ENCODE measurements at regions of chr1 and their contacts with region 1.

Region 1: GRCh38 chr1:169466259-169467230 is 19.2 kb downstream of the SLC19A2 start:
- DNase-seq: peak; percentile 46
- ATAC-seq: no peak
- H3K4me3 ChIP-seq: no peak overlapping the region
- H3K4me3 Mint-ChIP-seq: no peak overlapping the region
- H3K27ac ChIP-seq: no peak overlapping the region
- H3K27ac Mint-ChIP-seq: no peak overlapping the region
- H3K4me1 ChIP-seq: no peaks in the 10 kb centered on the region
- H3K4me1 Mint-ChIP-seq: no peaks in the 10 kb centered on the region
- H3K27me3 ChIP-seq: no peaks in the 10 kb centered on the region
- H3K27me3 Mint-ChIP-seq: no peaks in the 10 kb centered on the region
- CTCF ChIP-seq: peak; percentile 22

Region 2: GRCh38 chr1:169809370-169810095 is 343.0 kb after region 1 on chr1:
- CTCF ChIA-PET with region 1: interaction called, 9 read pairs
- POLR2A ChIA-PET with region 1: no interaction called
- intact Hi-C with region 1: loop called (anchors 1 kb)
- DNase-seq: peak; percentile 62
- ATAC-seq: no peak
- H3K4me3 ChIP-seq: no peak overlapping the region
- H3K4me3 Mint-ChIP-seq: no peak overlapping the region
- H3K27ac ChIP-seq: no peak overlapping the region
- H3K27ac Mint-ChIP-seq: no peak overlapping the region
- H3K4me1 ChIP-seq: no peaks in the 10 kb centered on the region
- H3K4me1 Mint-ChIP-seq: no peaks in the 10 kb centered on the region
- H3K27me3 ChIP-seq: no peaks in the 10 kb centered on the region
- H3K27me3 Mint-ChIP-seq: no peaks in the 10 kb centered on the region
- CTCF ChIP-seq: peak; percentile 81

Measured in B cell (primary cell).